Pancreas (tissue), 10 donors: ENCODE measurements at regions of chr17 and their contacts with region 1.

Region 1: GRCh38 chr17:34998205-34998604 is 17.9 kb downstream of the LIG3 start:
- DNase-seq: peak; percentile 50 to 84 (median 70)
- ATAC-seq: peak; percentile 78 to 96 (median 94)
- H3K4me3 ChIP-seq: no peak overlapping the region
- H3K27ac ChIP-seq: no peak overlapping the region
- H3K4me1 ChIP-seq: peaks cover 0 to 3% (median 0%) of the 10 kb centered on the region in 3 donors
- H3K27me3 ChIP-seq: no peaks in the 10 kb centered on the region
- CTCF ChIP-seq: peak; percentile 23 to 53 (median 40)

Region 2: GRCh38 chr17:35079551-35080423 is 81.6 kb after region 1 on chr17:
- intact Hi-C with region 1: loop called in 1 of 3 experiments (anchors 5 kb)
- DNase-seq: no peak
- ATAC-seq: no peak
- H3K4me3 ChIP-seq: no peak overlapping the region
- H3K27ac ChIP-seq: no peak overlapping the region
- H3K4me1 ChIP-seq: peaks cover 8 to 24% (median 24%) of the 10 kb centered on the region in 3 donors
- H3K27me3 ChIP-seq: no peaks in the 10 kb centered on the region
- CTCF ChIP-seq: no peak

Region 3: DNA sequence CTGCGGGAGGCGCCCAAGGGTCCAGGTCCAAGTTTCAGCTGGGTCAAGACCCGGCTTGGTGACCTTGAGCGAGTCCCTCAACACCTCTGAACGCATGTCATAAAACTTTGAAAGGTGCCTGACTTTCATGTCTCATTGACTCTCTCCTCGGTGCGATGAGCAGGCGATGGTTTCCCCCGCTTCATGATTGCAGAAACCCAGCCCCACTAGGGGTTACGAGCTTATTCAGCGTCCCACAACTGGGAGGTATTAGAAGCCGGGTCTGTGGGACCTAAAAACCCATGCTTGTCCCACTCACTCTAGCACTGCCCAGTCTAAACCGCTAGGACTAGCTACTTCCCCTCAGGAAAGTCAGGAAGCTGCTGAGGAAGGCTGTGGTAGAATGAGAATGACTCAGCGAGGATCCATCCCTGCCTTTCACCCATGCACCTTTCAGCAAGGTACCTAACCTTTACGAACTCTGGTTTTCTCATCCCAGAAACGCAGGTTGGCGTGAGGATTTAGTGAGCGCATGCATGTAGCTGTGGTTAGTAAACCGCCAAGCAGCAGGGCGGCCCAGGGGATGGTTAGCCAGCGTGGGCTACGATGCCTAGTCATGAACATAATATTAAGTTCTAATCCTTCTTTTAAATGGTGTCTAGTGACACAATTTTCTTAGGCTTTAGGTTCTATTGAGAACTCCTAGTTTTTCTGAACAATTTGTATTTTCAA is 91.5 kb after region 1 on chr17:
- intact Hi-C with region 1: loop called in 1 of 3 experiments (anchors 10 kb)
- DNase-seq: peak in 1 of 6 donors; percentile 21
- ATAC-seq: peak; percentile 3 to 11 (median 4)
- H3K4me3 ChIP-seq: peak overlapping the region in 3 of 4 donors; percentile 41 to 91 (median 83)
- H3K27ac ChIP-seq: peak overlapping the region in 3 of 4 donors; percentile 22 to 93 (median 38)
- H3K4me1 ChIP-seq: peaks cover 5 to 11% (median 10%) of the 10 kb centered on the region in 3 donors
- H3K27me3 ChIP-seq: no peaks in the 10 kb centered on the region
- CTCF ChIP-seq: no peak

Region 4: GRCh38 chr17:35119368-35120165 is 121.4 kb after region 1 on chr17 and contains the start of gene RAD51D:
- intact Hi-C with region 1: loop called in 1 of 3 experiments (anchors 10 kb)
- DNase-seq: peak; percentile 50 to 92 (median 81)
- ATAC-seq: peak; percentile 97 to 98 (median 98)
- H3K4me3 ChIP-seq: peak within 1 kb of the TSS; percentile 61 to 85 (median 80)
- H3K27ac ChIP-seq: peak within 1 kb of the TSS; percentile 30 to 66 (median 52)
- H3K4me1 ChIP-seq: peaks cover 0 to 8% (median 0%) of the 10 kb centered on the region in 3 donors
- H3K27me3 ChIP-seq: no peaks in the 10 kb centered on the region
- CTCF ChIP-seq: peak; percentile 86 to 96 (median 94)
- total RNA-seq, gene RAD51D: 4.4 to 9.4 (median 5.8) TPM

Region 5: GRCh38 chr17:35141681-35142466 is 143.7 kb after region 1 on chr17 and contains the start of gene NLE1:
- intact Hi-C with region 1: no loop called
- DNase-seq: peak; percentile 73 to 94 (median 85)
- ATAC-seq: peak; percentile 97 to 100 (median 99)
- H3K4me3 ChIP-seq: peak within 1 kb of the TSS; percentile 85 to 99 (median 94)
- H3K27ac ChIP-seq: no peak within 1 kb of the TSS
- H3K4me1 ChIP-seq: peaks cover 3 to 11% (median 8%) of the 10 kb centered on the region in 3 donors
- H3K27me3 ChIP-seq: no peaks in the 10 kb centered on the region
- CTCF ChIP-seq: peak; percentile 92 to 97 (median 95)
- total RNA-seq, gene NLE1: 10.6 to 32.2 (median 16.9) TPM

Region 6: GRCh38 chr17:35214631-35215273 is 216.5 kb after region 1 on chr17:
- intact Hi-C with region 1: no loop called
- DNase-seq: no peak
- ATAC-seq: no peak
- H3K4me3 ChIP-seq: no peak overlapping the region
- H3K27ac ChIP-seq: no peak overlapping the region
- H3K4me1 ChIP-seq: no peaks in the 10 kb centered on the region
- H3K27me3 ChIP-seq: no peaks in the 10 kb centered on the region
- CTCF ChIP-seq: no peak